H1 (cell line): ENCODE measurements at regions of chr1 and their contacts with region 1.

Region 1: GRCh38 chr1:154313066-154313356 is 7.9 kb upstream of the AQP10 start:
- DNase-seq: no peak
- H3K4me3 ChIP-seq: no peak overlapping the region
- H3K27ac ChIP-seq: no peak overlapping the region
- H3K4me1 ChIP-seq: no peaks in the 10 kb centered on the region
- H3K27me3 ChIP-seq: no peaks in the 10 kb centered on the region
- CTCF ChIP-seq: no peak
- EP300 ChIP-seq: no peak
- POLR2A ChIP-seq: no peak
- RAD21 ChIP-seq: no peak

Region 2: GRCh38 chr1:154241703-154242351 is 71.2 kb before region 1 on chr1:
- CTCF ChIA-PET with region 1: no interaction called
- POLR2A ChIA-PET with region 1: no interaction called
- DNase-seq: no peak
- H3K4me3 ChIP-seq: no peak overlapping the region
- H3K27ac ChIP-seq: no peak overlapping the region
- H3K4me1 ChIP-seq: no peaks in the 10 kb centered on the region
- H3K27me3 ChIP-seq: no peaks in the 10 kb centered on the region
- CTCF ChIP-seq: no peak
- EP300 ChIP-seq: no peak
- POLR2A ChIP-seq: no peak
- RAD21 ChIP-seq: no peak

Region 3: DNA sequence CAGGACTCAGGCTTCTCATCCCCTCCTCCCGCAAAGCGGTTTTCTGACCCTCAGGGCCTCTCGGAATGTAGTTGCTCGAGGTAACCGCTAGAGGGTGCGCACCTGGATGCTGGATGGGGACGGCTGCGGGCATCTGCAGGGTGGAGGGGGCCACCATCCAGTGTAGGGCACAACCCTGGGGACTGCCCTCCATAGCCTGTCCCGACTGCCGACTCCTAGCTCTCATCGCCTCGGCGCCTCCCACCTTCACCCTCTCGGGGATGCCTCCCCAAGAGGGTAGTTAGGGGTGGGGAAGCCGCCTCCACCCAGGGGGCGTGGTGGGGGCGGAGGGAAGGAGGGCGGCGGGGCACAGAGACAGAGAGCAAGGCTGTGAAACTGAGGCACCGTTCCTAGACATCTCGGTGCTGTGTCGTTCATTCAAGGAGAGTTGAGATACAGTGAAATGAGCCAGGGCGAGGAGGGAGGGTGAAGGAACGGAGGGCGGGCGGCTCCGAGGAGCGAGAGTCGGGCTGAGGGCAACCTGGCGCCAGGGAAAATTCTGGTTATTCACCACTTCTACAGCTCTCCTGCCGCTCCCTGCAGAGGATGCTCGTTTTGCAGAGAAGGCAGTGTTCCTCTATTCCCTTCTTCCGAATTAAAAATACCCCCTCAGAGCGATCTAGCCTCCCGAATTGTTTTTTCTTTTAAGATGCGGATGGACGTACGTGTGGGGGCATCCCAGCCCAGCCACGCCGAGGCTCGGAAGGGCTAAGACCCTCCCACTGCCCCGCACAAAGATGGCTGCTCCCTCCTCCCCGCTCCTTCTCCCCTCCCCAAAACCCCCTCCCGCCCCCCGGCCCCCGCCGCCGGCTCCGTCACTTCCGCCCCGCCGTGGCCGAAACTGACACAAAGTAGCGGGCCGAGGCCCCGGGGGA is 11.9 kb after region 1 on chr1 and contains the start of gene ATP8B2:
- CTCF ChIA-PET with region 1: interaction called, 45 read pairs
- POLR2A ChIA-PET with region 1: interaction called, 3 read pairs
- DNase-seq: peak; percentile 54 to 93
- H3K4me3 ChIP-seq: peak within 1 kb of the TSS; percentile 66 to 89 (median 86)
- H3K27ac ChIP-seq: peak within 1 kb of the TSS; percentile 35; the same call in 1 of the 2 replicates
- H3K4me1 ChIP-seq: peaks cover 23 to 25% (median 23%) of the 10 kb centered on the region in 4 experiments
- H3K27me3 ChIP-seq: no peaks in the 10 kb centered on the region
- CTCF ChIP-seq: peak; percentile 86 to 92 (median 92)
- EP300 ChIP-seq: no peak
- POLR2A ChIP-seq: no peak
- RAD21 ChIP-seq: peak; percentile 43 to 51; a peak in 3 of 4 replicates
- total RNA-seq, gene ATP8B2: 59.3 and 61.4 TPM in 2 replicates